Mammary epithelial cell (primary cell): ENCODE measurements at regions of chr10 and their contacts with region 1.

Region 1: GRCh38 chr10:70758757-70759514 is 26.2 kb downstream of the TBATA start:
- DNase-seq: peak; percentile 41
- H3K4me3 ChIP-seq: no peak overlapping the region
- H3K27ac ChIP-seq: no peak overlapping the region
- H3K4me1 ChIP-seq: no peaks in the 10 kb centered on the region
- H3K27me3 ChIP-seq: peaks cover 9% of the 10 kb centered on the region
- CTCF ChIP-seq: peak; percentile 54 to 81

Region 2: GRCh38 chr10:70540089-70540788 is 218.7 kb before region 1 on chr10:
- CTCF ChIA-PET with region 1: no interaction called
- dilution Hi-C with region 1: loop called (anchors 5 kb)
- in situ Hi-C with region 1: no loop called
- intact Hi-C with region 1: no loop called
- DNase-seq: no peak
- H3K4me3 ChIP-seq: no peak overlapping the region
- H3K27ac ChIP-seq: no peak overlapping the region
- H3K4me1 ChIP-seq: no peaks in the 10 kb centered on the region
- H3K27me3 ChIP-seq: no peaks in the 10 kb centered on the region
- CTCF ChIP-seq: peak; percentile 63 to 78

Region 3: GRCh38 chr10:70619271-70620019 is 139.5 kb before region 1 on chr10:
- CTCF ChIA-PET with region 1: interaction called, 8 read pairs
- dilution Hi-C with region 1: loop called (anchors 10 kb)
- in situ Hi-C with region 1: loop called (anchors 10 kb)
- intact Hi-C with region 1: loop called (anchors 1 kb)
- DNase-seq: peak; percentile 44
- H3K4me3 ChIP-seq: no peak overlapping the region
- H3K27ac ChIP-seq: no peak overlapping the region
- H3K4me1 ChIP-seq: no peaks in the 10 kb centered on the region
- H3K27me3 ChIP-seq: peaks cover 4% of the 10 kb centered on the region
- CTCF ChIP-seq: peak; percentile 41 to 50

Region 4: GRCh38 chr10:70714245-70714644 is 44.7 kb before region 1 on chr10:
- CTCF ChIA-PET with region 1: interaction called, 14 read pairs
- dilution Hi-C with region 1: loop called (anchors 5 kb)
- in situ Hi-C with region 1: no loop called
- intact Hi-C with region 1: no loop called
- DNase-seq: no peak
- H3K4me3 ChIP-seq: no peak overlapping the region
- H3K27ac ChIP-seq: no peak overlapping the region
- H3K4me1 ChIP-seq: no peaks in the 10 kb centered on the region
- H3K27me3 ChIP-seq: no peaks in the 10 kb centered on the region
- CTCF ChIP-seq: no peak

Region 5: GRCh38 chr10:70849582-70850016 is 90.7 kb after region 1 on chr10:
- CTCF ChIA-PET with region 1: no interaction called
- dilution Hi-C with region 1: no loop called
- in situ Hi-C with region 1: no loop called
- intact Hi-C with region 1: no loop called
- DNase-seq: peak; percentile 73
- H3K4me3 ChIP-seq: no peak overlapping the region
- H3K27ac ChIP-seq: no peak overlapping the region
- H3K4me1 ChIP-seq: peaks cover 22% of the 10 kb centered on the region
- H3K27me3 ChIP-seq: no peaks in the 10 kb centered on the region
- CTCF ChIP-seq: no peak

Region 6: GRCh38 chr10:70880077-70880534 is 121.2 kb after region 1 on chr10:
- CTCF ChIA-PET with region 1: no interaction called
- dilution Hi-C with region 1: no loop called
- in situ Hi-C with region 1: no loop called
- intact Hi-C with region 1: loop called (anchors 1 kb)
- DNase-seq: peak; percentile 54
- H3K4me3 ChIP-seq: no peak overlapping the region
- H3K27ac ChIP-seq: no peak overlapping the region
- H3K4me1 ChIP-seq: no peaks in the 10 kb centered on the region
- H3K27me3 ChIP-seq: no peaks in the 10 kb centered on the region
- CTCF ChIP-seq: peak; percentile 92 to 94